SK-N-SH (cell line): ENCODE measurements at regions of chr2 and their contacts with region 1.

Region 1: GRCh38 chr2:71923887-71924533 is 223.7 kb downstream of the CYP26B1 start:
- DNase-seq: peak; percentile 73
- H3K4me3 ChIP-seq: no peak overlapping the region
- H3K27ac ChIP-seq: no peak overlapping the region
- H3K4me1 ChIP-seq: peaks cover 0 to 6% of the 10 kb centered on the region in 2 experiments; a peak in 1 of 4 replicates
- H3K27me3 ChIP-seq: no peaks in the 10 kb centered on the region
- CTCF ChIP-seq: peak; percentile 75
- EP300 ChIP-seq: no peak
- RAD21 ChIP-seq: peak; percentile 88

Region 2: GRCh38 chr2:71897137-71897480 is 26.9 kb before region 1 on chr2:
- CTCF ChIA-PET with region 1: interaction called, 16 read pairs
- POLR2A ChIA-PET with region 1: no interaction called
- DNase-seq: no peak
- H3K4me3 ChIP-seq: no peak overlapping the region
- H3K27ac ChIP-seq: no peak overlapping the region
- H3K4me1 ChIP-seq: peaks cover 0 to 7% of the 10 kb centered on the region in 2 experiments; a peak in 1 of 4 replicates
- H3K27me3 ChIP-seq: no peaks in the 10 kb centered on the region
- CTCF ChIP-seq: no peak
- EP300 ChIP-seq: no peak
- RAD21 ChIP-seq: no peak

Region 3: DNA sequence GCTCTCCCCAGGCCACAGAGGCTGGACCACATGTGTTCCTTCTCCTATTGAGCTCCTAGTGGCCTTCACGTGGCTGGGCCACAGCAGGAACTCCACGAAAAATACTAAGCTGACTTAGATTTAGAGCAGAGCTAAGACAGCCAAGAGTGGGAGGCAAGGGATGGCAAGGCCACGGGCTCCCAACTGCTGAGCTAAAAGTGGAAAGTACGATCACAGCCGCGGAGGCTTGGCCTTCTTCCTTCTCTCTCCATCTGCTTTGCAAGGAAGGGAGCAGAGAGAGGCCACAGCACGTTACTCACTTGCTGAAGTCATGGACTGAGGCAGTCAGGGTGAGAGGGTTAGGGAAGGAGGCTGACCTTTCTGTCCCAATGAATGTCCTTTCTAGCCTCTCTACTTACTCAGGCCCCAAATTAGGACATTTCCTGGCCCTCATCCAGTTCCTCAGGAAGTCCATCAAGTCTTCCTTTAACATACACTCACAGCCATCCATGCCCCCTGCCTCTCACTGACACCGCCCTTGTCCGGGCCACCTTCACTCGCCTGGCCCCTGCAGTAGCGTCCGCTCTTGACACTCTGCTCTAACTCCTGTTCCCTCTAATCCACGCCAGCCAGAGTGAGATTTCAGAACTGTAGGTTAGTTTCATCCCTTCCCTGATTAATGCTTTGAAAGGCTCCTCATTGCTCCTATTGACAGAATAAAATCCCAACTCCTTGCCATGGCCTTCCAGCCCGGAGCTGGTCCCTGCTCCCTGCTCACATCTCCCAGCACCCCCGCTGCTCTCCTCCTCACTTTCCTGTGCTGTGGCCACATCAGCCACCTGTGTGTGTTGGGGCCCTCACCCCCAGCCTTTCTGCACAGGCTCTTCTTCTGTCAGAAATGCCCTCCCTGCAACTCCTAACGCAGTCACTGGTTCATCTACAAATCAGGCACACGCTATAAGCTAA is 19.5 kb after region 1 on chr2:
- CTCF ChIA-PET with region 1: interaction called, 39 read pairs
- POLR2A ChIA-PET with region 1: no interaction called
- DNase-seq: no peak
- H3K4me3 ChIP-seq: no peak overlapping the region
- H3K27ac ChIP-seq: no peak overlapping the region
- H3K4me1 ChIP-seq: peaks cover 0 to 4% of the 10 kb centered on the region in 2 experiments; a peak in 1 of 4 replicates
- H3K27me3 ChIP-seq: no peaks in the 10 kb centered on the region
- CTCF ChIP-seq: no peak
- EP300 ChIP-seq: no peak
- RAD21 ChIP-seq: no peak

Region 4: DNA sequence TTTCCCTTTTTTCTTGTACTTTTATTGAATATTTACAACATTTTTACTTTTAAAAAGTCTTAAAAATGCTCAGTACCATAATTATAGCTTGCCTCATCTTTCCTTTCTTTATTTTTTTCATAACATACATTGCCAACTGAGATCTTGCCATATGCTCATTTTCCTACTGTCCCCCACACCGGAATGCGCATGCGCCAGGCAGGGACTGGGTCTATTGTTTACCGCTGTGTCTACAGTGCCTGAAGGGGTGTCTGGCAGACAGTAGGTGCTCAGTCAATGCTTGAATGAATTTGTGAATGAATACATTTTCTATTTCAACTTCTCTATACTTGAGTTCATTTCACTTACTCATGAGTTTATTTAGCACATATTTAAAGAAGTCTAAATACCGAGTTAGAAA is 65.7 kb after region 1 on chr2:
- CTCF ChIA-PET with region 1: interaction called, 59 read pairs
- POLR2A ChIA-PET with region 1: no interaction called
- DNase-seq: peak; percentile 44
- H3K4me3 ChIP-seq: no peak overlapping the region
- H3K27ac ChIP-seq: no peak overlapping the region
- H3K4me1 ChIP-seq: peaks cover 0 to 2% of the 10 kb centered on the region in 2 experiments; a peak in 2 of 4 replicates
- H3K27me3 ChIP-seq: no peaks in the 10 kb centered on the region; the same call in 1 of the 2 replicates
- CTCF ChIP-seq: no peak
- EP300 ChIP-seq: no peak
- RAD21 ChIP-seq: no peak

Region 5: GRCh38 chr2:72137498-72138010 is 213.5 kb after region 1 on chr2:
- CTCF ChIA-PET with region 1: interaction called, 39 read pairs
- POLR2A ChIA-PET with region 1: no interaction called
- DNase-seq: peak; percentile 87
- H3K4me3 ChIP-seq: peak overlapping the region in 1 of 2 experiments; percentile 36; a peak in 1 of 4 replicates
- H3K27ac ChIP-seq: no peak overlapping the region
- H3K4me1 ChIP-seq: no peaks in the 10 kb centered on the region
- H3K27me3 ChIP-seq: no peaks in the 10 kb centered on the region; the same call in 1 of the 2 replicates
- CTCF ChIP-seq: peak; percentile 95
- EP300 ChIP-seq: no peak
- RAD21 ChIP-seq: peak; percentile 54

Region 6: GRCh38 chr2:72745679-72746368 is 821.8 kb after region 1 on chr2:
- CTCF ChIA-PET with region 1: interaction called, 11 read pairs
- POLR2A ChIA-PET with region 1: no interaction called
- DNase-seq: peak; percentile 21
- H3K4me3 ChIP-seq: no peak overlapping the region
- H3K27ac ChIP-seq: no peak overlapping the region
- H3K4me1 ChIP-seq: peaks cover 0 to 12% of the 10 kb centered on the region in 2 experiments; a peak in 1 of 4 replicates
- H3K27me3 ChIP-seq: no peaks in the 10 kb centered on the region
- CTCF ChIP-seq: peak; percentile 85
- EP300 ChIP-seq: no peak
- RAD21 ChIP-seq: peak; percentile 86